ENCODE measurements at regions of chr1 and their contacts with region 1.

Region 1: GRCh38 chr1:94335950-94336349 is 82.2 kb upstream of the ABCD3 start:
- DNase-seq: peak; percentile 72
- H3K4me3 ChIP-seq: no peak overlapping the region
- CTCF ChIP-seq: peak; percentile 72

Region 2: DNA sequence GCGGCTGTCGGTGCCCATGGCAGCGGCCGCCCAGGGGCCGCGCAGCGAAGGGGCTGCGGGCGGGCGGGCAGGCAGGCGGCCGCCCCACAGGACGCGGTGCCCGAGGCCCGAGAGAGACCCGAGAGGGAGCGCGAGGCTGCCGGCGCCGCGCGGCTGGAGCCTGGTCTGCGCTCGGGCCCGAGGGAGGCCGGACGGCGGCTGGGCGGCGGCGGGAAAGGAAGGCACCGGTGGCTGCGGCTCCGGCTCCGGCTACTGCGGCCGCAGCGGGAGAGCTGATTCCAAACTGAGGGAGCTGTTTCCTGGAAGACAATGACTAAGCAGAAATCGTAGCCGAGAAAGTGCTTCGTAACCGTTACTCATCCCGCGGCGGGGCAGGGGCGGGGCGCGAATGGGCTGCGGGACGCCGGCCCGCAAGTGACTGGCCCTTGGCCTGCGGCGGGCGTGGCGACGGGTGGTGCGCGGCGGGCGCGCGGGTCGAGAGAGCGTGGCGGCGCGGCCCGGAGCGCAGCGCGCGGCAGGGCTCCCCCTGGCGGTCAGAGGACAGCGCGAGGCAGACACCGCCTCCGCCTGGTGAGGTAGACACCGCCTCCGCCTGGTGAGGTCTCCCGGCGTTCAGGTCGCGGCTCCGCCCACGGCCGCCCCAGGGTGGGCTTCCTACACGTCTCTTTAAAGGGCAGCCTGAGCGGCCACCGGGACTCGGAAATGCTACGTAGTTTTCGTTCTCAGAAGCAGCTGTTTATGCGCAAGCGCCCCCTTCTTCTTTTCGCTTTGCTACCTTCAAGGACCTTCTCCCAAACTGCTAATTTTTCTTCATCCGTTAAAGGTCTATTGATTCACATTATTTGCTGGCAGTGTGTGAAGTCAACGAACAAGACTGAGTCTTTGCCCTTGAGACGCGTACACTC is 426.6 kb before region 1 on chr1 and contains the start of gene GCLM:
- CTCF ChIA-PET with region 1: interaction called, 14 read pairs
- POLR2A ChIA-PET with region 1: no interaction called
- DNase-seq: peak; percentile 61
- H3K4me3 ChIP-seq: peak within 1 kb of the TSS; percentile 76
- CTCF ChIP-seq: peak; percentile 97

Region 3: DNA sequence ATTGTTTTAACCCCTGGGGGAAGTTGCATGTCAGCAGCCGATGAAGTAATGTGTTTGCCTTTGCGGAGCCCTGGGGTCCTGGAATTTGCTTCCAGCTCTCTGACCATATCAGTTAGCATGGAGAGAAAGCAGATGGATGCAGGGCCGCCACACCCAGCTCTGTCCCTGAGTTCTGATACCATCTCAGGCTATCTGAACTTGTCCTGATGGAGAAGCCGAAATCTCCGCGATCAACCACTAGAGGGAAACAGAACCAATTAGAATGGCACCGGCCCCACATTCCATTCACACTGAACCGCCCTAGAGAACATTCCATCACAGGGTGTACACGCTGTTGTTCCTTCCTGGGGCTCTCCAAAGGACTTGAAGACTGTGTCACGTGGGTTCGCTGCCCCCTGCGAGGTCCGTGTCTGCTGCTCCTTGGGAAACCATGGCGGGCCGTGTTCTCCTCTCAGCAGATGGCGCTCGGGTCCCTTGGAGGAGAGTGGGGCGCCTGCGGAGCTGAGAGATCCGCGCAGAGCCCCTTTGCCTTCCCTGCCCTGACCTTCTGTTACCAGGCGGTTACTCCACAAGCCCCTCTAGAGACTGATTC is 290.4 kb before region 1 on chr1:
- CTCF ChIA-PET with region 1: interaction called, 1,945 read pairs
- POLR2A ChIA-PET with region 1: interaction called, 3 read pairs
- DNase-seq: peak; percentile 93
- H3K4me3 ChIP-seq: no peak overlapping the region; the same call in 1 of the 2 replicates
- CTCF ChIP-seq: peak; percentile 63

Region 4: DNA sequence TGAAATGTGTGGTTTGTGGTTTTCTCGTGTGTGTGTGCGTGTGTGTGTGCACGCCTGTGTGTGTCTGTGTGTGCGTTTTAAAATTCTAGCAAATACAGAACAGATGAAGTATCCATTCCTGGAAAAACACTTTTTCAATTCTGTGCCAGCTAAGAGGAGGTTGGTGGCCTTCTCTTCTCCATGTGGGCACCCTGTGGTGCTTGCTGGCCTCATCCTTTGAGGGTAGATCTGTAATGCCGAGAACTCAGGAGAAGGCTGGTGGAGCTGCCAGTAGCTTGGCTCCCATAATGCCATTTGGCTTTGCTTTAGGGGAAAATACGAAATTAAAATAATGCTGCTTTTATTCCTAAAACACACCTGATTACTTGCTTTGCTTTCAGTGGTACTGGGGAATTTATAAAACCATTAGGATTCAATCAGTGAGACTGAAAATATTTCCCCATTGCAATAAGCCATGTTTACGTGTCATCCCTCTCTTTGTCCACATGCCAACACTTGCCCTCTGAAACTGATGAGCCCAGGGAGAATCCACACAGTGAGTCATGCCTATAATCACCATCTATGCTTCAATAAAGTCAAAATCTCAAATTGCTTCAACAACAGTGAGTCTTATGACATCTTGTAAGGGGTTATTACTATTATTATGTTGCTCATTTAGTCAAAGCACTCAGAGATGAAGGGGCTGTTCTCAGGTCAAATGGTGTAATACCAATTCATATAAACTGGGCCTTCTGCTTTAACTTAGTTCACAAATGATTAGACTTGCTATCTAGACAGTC is 254.2 kb before region 1 on chr1:
- CTCF ChIA-PET with region 1: interaction called, 12 read pairs
- POLR2A ChIA-PET with region 1: no interaction called
- DNase-seq: peak; percentile 82
- H3K4me3 ChIP-seq: no peak overlapping the region
- CTCF ChIP-seq: no peak

Region 5: DNA sequence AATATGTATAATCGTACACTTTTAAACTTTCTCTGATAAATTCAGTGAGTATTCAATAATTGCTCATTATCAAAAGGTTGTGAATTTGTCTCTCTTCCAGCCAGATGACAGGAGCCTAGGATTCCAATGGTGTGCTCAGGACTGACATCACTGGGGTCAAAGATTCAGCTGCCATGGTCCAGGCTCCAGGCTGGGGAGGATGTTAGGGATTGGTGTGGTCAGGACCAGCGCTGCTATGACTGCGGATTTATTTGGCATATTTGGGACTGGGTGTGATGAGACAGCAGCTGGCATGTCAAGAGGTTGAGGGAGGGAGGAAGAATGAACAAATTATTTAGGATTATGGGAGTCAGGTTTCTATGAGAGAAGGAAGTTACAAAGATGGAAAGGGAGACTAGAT is 166.8 kb before region 1 on chr1:
- CTCF ChIA-PET with region 1: no interaction called
- POLR2A ChIA-PET with region 1: no interaction called
- DNase-seq: no peak
- H3K4me3 ChIP-seq: no peak overlapping the region
- CTCF ChIP-seq: no peak

Region 6: DNA sequence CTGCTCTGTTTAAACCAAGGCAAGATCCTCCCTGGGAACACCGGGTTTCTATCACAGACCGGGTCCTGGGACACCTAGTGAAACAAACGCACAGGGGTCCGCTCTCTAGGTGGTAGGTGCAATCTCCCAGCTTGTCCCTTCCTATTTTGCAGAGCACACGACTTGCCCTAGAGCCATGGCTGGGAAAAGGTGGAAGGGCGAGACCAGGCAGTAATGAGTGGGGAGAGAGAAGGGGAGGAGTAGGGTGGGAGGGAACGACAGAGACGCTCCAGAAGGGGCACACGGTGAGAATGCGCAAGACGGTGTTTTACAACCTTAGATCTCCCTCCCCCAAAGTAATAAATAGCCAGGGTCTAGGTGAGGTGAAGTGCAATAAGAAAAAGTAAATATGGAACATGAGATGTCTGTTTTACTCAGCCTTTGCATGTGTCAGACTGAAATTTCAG is 89.2 kb before region 1 on chr1:
- CTCF ChIA-PET with region 1: interaction called, 10 read pairs
- POLR2A ChIA-PET with region 1: no interaction called
- DNase-seq: no peak
- H3K4me3 ChIP-seq: peak overlapping the region; percentile 68
- CTCF ChIP-seq: no peak

Region 7: DNA sequence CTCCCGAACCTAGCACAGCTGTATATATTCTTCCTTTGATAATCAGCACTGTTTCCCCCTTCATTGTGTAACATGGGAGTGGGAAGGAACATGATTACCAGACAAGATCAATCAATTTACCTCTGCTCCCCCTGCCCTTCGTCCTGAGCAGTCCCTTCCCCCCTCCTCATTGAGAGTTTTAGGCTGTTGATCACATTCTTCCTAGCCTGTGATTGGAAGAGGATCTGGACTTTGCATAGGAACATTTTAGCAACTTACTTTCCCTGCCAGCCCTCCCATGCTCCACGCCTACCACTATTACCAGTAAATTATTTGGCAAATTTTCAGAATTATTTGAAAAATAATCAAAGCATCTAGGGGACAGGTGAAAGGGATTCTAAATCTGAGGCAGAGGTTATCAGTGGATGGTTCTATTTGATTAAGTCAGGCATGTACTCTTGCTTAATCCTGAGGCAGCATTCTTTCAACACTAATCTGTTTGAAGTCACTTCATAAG is 19.6 kb after region 1 on chr1:
- CTCF ChIA-PET with region 1: interaction called, 11 read pairs
- POLR2A ChIA-PET with region 1: no interaction called
- DNase-seq: no peak
- H3K4me3 ChIP-seq: no peak overlapping the region
- CTCF ChIP-seq: no peak

Region 8: DNA sequence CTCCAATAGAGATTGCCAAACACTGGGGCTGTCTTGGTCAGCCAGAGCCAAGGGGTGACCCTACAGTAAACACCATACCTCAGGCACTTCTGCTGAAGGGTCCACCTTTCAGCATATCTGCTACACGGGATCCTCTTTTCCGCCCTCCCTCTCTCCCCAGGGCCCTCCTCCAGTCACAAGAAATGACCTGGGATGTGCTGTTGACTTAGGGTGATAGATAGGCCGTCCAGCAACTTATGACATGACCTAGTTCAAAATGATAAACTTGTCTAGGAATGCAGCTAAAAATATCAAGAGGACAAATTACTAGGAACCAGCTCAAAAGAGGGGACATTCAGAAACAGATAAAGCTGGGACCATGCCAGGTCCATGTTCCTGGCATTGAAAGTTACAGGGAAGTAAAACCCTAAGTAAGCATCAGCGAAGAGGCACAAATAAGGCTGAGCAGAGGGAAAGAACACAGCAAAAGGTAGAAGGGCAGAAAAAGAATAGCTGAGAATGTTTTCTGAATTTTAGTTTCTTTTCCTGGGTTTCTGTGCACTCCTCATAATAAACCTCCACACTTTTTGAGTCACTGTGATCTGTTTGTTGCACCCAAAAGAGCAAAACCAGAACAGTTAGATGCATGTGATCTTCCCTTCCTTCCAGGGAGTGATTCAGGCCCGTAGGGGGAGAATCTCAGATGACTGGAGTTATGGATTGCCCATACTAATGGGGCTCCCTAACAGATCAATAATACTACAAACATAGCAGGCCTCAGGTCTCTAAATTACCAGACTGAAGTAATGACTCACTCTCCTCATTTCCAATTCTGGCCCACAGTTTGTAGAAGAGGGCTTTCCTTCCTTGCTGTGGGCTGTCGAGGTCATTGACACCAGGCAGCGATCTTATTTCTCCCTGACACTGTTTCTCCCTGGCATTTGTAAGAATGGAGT is 254.5 kb after region 1 on chr1:
- CTCF ChIA-PET with region 1: no interaction called
- POLR2A ChIA-PET with region 1: no interaction called
- DNase-seq: no peak
- H3K4me3 ChIP-seq: no peak overlapping the region
- CTCF ChIP-seq: no peak

Region 9: DNA sequence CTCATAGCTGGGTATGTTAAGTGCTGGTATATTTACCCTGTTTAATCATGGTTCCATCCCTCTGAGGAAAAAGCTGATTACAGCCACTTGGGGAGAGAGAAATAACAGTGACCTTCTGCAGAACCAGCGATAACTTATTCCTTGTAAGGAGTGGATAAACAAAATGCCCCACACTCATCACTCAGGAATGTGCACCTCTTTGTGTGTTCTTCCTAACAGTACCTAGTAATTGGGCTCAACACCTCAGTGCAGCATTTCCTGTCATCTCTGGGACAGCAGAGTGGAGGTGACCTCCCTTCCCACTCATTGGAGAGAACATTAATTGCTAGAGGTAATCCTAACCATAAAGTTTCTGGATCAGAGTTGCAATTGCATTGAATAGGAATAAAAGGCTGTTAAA is 318.1 kb after region 1 on chr1:
- CTCF ChIA-PET with region 1: no interaction called
- POLR2A ChIA-PET with region 1: no interaction called
- DNase-seq: no peak
- H3K4me3 ChIP-seq: no peak overlapping the region
- CTCF ChIP-seq: no peak

Measured in AG04449 (cell line).